CD8-positive, alpha-beta T cell (primary cell): ENCODE measurements at regions of chr9 and their contacts with region 1.

Region 1: DNA sequence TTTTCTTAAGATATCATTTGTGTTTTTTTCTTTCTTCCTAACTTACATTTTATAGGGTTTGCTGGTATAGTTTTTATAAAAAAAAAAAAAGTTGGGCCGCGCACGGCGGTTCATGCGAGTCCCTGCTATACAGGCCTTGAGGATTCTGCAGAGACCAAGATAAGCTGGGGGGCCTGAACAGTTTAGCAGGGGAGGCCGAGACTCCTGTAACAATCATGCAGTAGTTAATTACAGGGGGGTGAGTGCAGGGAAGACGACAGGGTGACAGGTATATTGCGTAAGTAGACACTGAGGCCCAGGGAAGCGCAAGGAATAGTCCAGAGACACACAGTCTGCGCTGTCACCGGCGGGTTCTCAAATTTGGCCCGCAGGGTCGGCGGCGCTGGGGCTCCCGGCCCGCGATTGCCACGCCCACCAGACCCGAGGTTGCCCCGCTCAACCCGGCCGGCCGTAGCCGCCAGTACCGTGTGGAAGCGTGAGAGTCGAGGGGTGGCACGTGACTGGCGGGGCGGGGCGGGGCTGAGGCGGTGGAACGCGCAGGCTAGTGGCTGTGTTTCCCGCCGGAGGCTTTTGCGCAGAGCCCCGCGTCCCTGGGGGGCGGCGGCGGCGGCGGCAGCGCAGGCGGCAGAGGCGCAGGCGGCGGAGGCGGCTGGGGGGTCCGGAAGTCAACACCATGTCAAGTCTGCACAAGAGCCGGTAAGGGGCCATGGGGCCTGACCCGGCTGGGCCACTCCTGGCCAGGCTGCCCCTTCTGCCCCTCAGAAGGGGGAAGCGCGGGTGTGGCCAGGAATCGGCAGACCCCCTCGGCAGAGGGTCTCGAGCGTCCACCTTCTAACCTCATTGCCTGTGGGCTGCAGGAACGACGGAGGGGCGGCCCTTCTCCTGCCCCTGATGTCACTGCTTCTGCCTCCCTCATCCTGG is at the start of gene TBC1D13:
- DNase-seq: peak; percentile 86 to 95 (median 89)
- ATAC-seq: peak; percentile 90
- H3K4me3 ChIP-seq: peak within 1 kb of the TSS; percentile 96 to 98
- H3K4me3 Mint-ChIP-seq: peak within 1 kb of the TSS; percentile 94
- H3K27ac ChIP-seq: peak within 1 kb of the TSS; percentile 82 to 83
- H3K27ac Mint-ChIP-seq: peak within 1 kb of the TSS; percentile 96
- H3K4me1 ChIP-seq: peaks cover 20% of the 10 kb centered on the region
- H3K4me1 Mint-ChIP-seq: peaks cover 23% of the 10 kb centered on the region
- H3K27me3 ChIP-seq: no peaks in the 10 kb centered on the region
- H3K27me3 Mint-ChIP-seq: no peaks in the 10 kb centered on the region
- CTCF ChIP-seq: no peak
- total RNA-seq, gene TBC1D13: 30.7 to 35.0 TPM

Region 2: DNA sequence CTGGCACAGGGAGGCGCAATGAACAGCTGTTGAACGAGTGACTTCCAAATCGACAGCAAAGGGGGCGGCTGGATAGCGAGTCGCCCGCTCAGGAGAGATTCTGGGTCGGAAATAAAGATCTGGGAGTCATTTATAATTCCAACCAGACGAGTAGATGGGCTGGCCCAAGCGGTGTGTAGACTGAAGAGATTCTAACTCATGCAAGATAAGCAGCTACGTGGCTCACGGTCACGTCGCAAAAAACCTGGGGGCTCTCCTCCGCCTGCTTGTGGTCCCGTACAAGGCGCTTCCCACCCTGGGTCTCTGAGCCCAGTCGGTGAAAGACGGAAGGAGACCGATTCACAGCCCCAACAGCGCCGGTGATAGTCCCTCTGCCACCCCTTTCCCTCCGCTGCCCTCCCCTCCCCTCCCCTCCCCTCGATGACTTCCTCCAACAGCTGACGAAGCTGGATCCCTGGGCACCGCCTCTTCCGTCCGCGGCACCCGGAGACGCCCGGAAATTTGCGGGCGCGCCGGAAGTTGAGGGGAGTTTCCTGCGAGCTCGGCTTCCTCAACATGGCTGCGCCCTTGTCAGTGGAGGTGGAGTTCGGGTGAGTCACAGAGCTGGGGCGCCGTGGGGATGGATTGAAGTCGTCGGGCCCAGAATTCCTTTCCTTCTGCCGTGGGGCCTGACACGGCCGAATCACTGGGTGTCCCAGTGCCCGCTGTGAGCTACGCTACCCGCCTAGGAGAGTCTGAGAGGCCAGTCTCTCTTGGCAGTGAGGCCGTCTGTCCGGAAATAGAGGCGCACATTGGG is 415.9 kb before region 1 on chr9 and contains the start of gene URM1:
- CTCF ChIA-PET with region 1: no interaction called
- POLR2A ChIA-PET with region 1: no interaction called
- intact Hi-C with region 1: loop called (anchors 1 to 5 kb)
- DNase-seq: peak; percentile 91 to 98 (median 96)
- ATAC-seq: peak; percentile 90
- H3K4me3 ChIP-seq: peak within 1 kb of the TSS; percentile 84 to 95
- H3K4me3 Mint-ChIP-seq: peak within 1 kb of the TSS; percentile 97
- H3K27ac ChIP-seq: peak within 1 kb of the TSS; percentile 76 to 96
- H3K27ac Mint-ChIP-seq: peak within 1 kb of the TSS; percentile 98
- H3K4me1 ChIP-seq: peaks cover 16% of the 10 kb centered on the region
- H3K4me1 Mint-ChIP-seq: peaks cover 43% of the 10 kb centered on the region
- H3K27me3 ChIP-seq: no peaks in the 10 kb centered on the region
- H3K27me3 Mint-ChIP-seq: no peaks in the 10 kb centered on the region
- CTCF ChIP-seq: no peak
- total RNA-seq, gene URM1: 30.4 to 31.5 TPM

Region 3: GRCh38 chr9:128656416-128657343 is 130.3 kb before region 1 on chr9 and contains the start of gene DYNC2I2:
- CTCF ChIA-PET with region 1: no interaction called
- POLR2A ChIA-PET with region 1: no interaction called
- intact Hi-C with region 1: loop called (anchors 1 to 5 kb)
- DNase-seq: peak; percentile 92 to 98 (median 97)
- ATAC-seq: peak; percentile 96
- H3K4me3 ChIP-seq: peak within 1 kb of the TSS; percentile 72 to 76
- H3K4me3 Mint-ChIP-seq: peak within 1 kb of the TSS; percentile 95
- H3K27ac ChIP-seq: peak within 1 kb of the TSS; percentile 88 to 97
- H3K27ac Mint-ChIP-seq: peak within 1 kb of the TSS; percentile 99
- H3K4me1 ChIP-seq: peaks cover 5% of the 10 kb centered on the region
- H3K4me1 Mint-ChIP-seq: peaks cover 7% of the 10 kb centered on the region
- H3K27me3 ChIP-seq: no peaks in the 10 kb centered on the region
- H3K27me3 Mint-ChIP-seq: no peaks in the 10 kb centered on the region
- CTCF ChIP-seq: no peak
- total RNA-seq, gene DYNC2I2: 3.7 to 3.9 TPM

Region 4: GRCh38 chr9:128702445-128702948 is 84.4 kb before region 1 on chr9 and contains the start of gene PKN3:
- CTCF ChIA-PET with region 1: no interaction called
- POLR2A ChIA-PET with region 1: no interaction called
- intact Hi-C with region 1: loop called (anchors 1 kb)
- DNase-seq: peak; percentile 76 to 91 (median 88)
- ATAC-seq: peak; percentile 85
- H3K4me3 ChIP-seq: peak within 1 kb of the TSS; percentile 49 to 70
- H3K4me3 Mint-ChIP-seq: peak within 1 kb of the TSS; percentile 87
- H3K27ac ChIP-seq: peak within 1 kb of the TSS in 1 of 2 experiments; percentile 51
- H3K27ac Mint-ChIP-seq: peak within 1 kb of the TSS; percentile 52
- H3K4me1 ChIP-seq: peaks cover 16% of the 10 kb centered on the region
- H3K4me1 Mint-ChIP-seq: peaks cover 13% of the 10 kb centered on the region
- H3K27me3 ChIP-seq: no peaks in the 10 kb centered on the region
- H3K27me3 Mint-ChIP-seq: no peaks in the 10 kb centered on the region
- CTCF ChIP-seq: peak; percentile 89
- total RNA-seq, gene PKN3: 1.3 to 2.0 TPM

Region 5: DNA sequence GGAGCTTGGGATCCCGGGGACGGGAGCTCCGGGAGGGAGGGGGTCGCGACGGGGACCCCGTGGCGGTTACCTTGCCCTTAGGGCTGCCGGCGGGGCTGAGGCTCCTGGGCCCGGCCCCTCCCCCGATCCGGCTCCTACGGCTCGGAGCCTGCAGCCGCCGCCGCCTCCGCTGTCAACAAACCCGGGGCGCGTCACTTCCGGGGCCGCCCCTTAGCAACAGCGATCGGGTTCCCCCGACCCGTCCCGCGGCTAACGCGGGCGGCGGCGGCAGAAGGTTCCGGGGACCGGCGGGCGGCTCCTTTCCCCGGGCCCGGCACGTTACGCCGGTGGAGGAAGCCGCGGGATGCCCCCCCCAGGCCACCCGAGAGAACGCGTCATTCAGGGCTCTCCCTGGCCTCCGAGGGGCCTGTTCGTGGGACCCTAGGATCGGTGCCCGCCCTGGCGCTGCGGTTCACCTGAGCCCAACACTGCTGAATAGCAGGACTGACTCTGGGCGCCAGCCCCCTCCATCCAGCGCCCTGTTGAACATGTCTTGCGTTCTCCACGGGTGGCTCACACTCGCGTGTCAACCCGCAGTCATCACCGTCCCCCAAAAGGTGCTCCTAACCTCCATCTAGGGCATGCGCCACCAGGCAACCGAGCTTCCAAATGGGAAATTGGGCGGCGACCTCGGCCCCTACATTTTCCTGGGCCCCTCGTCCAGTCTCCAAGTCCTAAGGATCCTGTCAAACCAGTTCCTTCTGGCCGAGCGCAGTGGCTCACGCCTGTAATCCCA is 15.0 kb before region 1 on chr9 and contains the start of gene ZER1:
- CTCF ChIA-PET with region 1: interaction called, 9 read pairs
- POLR2A ChIA-PET with region 1: interaction called, 40 read pairs
- intact Hi-C with region 1: loop called (anchors 1 kb)
- DNase-seq: peak; percentile 86 to 98 (median 95)
- ATAC-seq: peak; percentile 85
- H3K4me3 ChIP-seq: peak within 1 kb of the TSS; percentile 82 to 98
- H3K4me3 Mint-ChIP-seq: peak within 1 kb of the TSS; percentile 96
- H3K27ac ChIP-seq: peak within 1 kb of the TSS; percentile 80 to 98
- H3K27ac Mint-ChIP-seq: peak within 1 kb of the TSS; percentile 99
- H3K4me1 ChIP-seq: peaks cover 22% of the 10 kb centered on the region
- H3K4me1 Mint-ChIP-seq: peaks cover 33% of the 10 kb centered on the region
- H3K27me3 ChIP-seq: no peaks in the 10 kb centered on the region
- H3K27me3 Mint-ChIP-seq: no peaks in the 10 kb centered on the region
- CTCF ChIP-seq: no peak
- total RNA-seq, gene ZER1: 35.9 to 45.2 TPM

Region 6: GRCh38 chr9:128829477-128830251 is 42.7 kb after region 1 on chr9 and contains the start of gene SPOUT1:
- CTCF ChIA-PET with region 1: no interaction called
- POLR2A ChIA-PET with region 1: interaction called, 5 read pairs
- intact Hi-C with region 1: loop called in 1 of 2 experiments (anchors 1 kb)
- DNase-seq: peak; percentile 88 to 96 (median 92)
- ATAC-seq: peak; percentile 99
- H3K4me3 ChIP-seq: peak within 1 kb of the TSS; percentile 89 to 99
- H3K4me3 Mint-ChIP-seq: peak within 1 kb of the TSS; percentile 96
- H3K27ac ChIP-seq: peak within 1 kb of the TSS; percentile 73 to 83
- H3K27ac Mint-ChIP-seq: peak within 1 kb of the TSS; percentile 94
- H3K4me1 ChIP-seq: peaks cover 18% of the 10 kb centered on the region
- H3K4me1 Mint-ChIP-seq: peaks cover 20% of the 10 kb centered on the region
- H3K27me3 ChIP-seq: no peaks in the 10 kb centered on the region
- H3K27me3 Mint-ChIP-seq: no peaks in the 10 kb centered on the region
- CTCF ChIP-seq: no peak
- total RNA-seq, gene SPOUT1: 25.0 to 25.2 TPM